Activated CD4-positive, alpha-beta memory T cell treated with anti-CD3 and anti-CD28 coated beads for 36 hours (primary cell): ENCODE measurements at regions of chr16 and their contacts with region 1.

Region 1: DNA sequence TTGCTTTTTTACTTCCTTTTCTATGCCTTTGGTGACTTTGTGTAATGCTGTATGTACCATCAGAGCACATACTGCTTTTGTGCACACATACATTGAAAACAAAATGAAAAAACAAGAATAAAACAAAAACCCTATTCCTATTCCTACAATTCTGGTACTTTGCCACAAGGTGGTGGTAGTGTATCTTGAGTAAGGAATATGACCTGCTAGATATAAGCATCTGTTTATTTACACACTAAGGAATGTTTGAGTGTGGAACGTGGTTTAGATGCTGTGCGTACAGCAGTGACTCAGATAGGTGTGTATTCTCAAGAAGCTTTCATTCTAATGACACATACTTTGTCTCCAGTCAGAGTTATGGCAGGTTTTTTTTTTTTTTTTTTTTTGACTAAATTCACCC is 606.2 kb downstream of the WWOX start:
- DNase-seq: peak; percentile 51
- H3K4me3 Mint-ChIP-seq: no peak overlapping the region
- H3K27ac Mint-ChIP-seq: peak overlapping the region; percentile 87
- H3K4me1 Mint-ChIP-seq: peaks cover 16% of the 10 kb centered on the region
- H3K27me3 Mint-ChIP-seq: no peaks in the 10 kb centered on the region

Region 2: GRCh38 chr16:78503602-78504001 is 202.1 kb before region 1 on chr16:
- CTCF ChIA-PET with region 1: no interaction called
- POLR2A ChIA-PET with region 1: no interaction called
- intact Hi-C with region 1: loop called (anchors 5 kb)
- DNase-seq: peak; percentile 52
- H3K4me3 Mint-ChIP-seq: no peak overlapping the region
- H3K27ac Mint-ChIP-seq: no peak overlapping the region
- H3K4me1 Mint-ChIP-seq: no peaks in the 10 kb centered on the region
- H3K27me3 Mint-ChIP-seq: no peaks in the 10 kb centered on the region

Region 3: GRCh38 chr16:78672779-78673556 is 32.7 kb before region 1 on chr16:
- CTCF ChIA-PET with region 1: no interaction called
- POLR2A ChIA-PET with region 1: no interaction called
- intact Hi-C with region 1: loop called (anchors 1 kb)
- DNase-seq: no peak
- H3K4me3 Mint-ChIP-seq: no peak overlapping the region
- H3K27ac Mint-ChIP-seq: no peak overlapping the region
- H3K4me1 Mint-ChIP-seq: no peaks in the 10 kb centered on the region
- H3K27me3 Mint-ChIP-seq: no peaks in the 10 kb centered on the region

Region 4: DNA sequence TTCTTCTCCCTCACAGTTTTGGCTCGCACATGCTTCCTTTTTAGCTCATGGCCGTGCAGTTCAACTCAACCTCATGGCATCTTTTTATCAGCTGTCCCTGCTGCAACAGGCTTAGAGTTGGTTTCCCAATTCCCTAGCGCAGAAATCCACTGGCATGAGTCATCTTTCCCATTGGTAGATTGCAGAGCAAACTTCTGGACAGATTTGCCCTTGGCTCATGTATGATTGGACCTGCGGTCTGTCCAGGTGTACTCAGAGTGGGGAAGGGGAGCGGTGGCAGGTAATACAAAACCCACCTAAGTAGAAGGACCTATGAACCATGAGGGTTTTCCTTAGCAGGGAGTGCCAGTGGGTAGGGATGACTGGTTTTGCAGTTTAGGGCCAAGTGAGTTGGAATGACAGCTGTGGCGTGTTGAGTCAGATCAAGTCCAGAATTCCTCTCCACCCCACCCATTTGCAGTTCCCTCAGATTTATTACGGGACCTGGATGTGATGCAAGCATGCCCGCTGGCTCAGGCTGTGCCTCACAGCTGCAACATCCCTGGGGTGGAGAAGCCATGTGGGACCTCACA is 21.6 kb before region 1 on chr16:
- CTCF ChIA-PET with region 1: no interaction called
- POLR2A ChIA-PET with region 1: no interaction called
- intact Hi-C with region 1: no loop called
- DNase-seq: no peak
- H3K4me3 Mint-ChIP-seq: no peak overlapping the region
- H3K27ac Mint-ChIP-seq: no peak overlapping the region
- H3K4me1 Mint-ChIP-seq: no peaks in the 10 kb centered on the region
- H3K27me3 Mint-ChIP-seq: no peaks in the 10 kb centered on the region

Region 5: GRCh38 chr16:78742501-78743283 is 37.0 kb after region 1 on chr16:
- CTCF ChIA-PET with region 1: interaction called, 3 read pairs
- POLR2A ChIA-PET with region 1: no interaction called
- intact Hi-C with region 1: loop called (anchors 1 kb)
- DNase-seq: peak; percentile 94
- H3K4me3 Mint-ChIP-seq: peak overlapping the region; percentile 73
- H3K27ac Mint-ChIP-seq: peak overlapping the region; percentile 95
- H3K4me1 Mint-ChIP-seq: peaks cover 40% of the 10 kb centered on the region
- H3K27me3 Mint-ChIP-seq: no peaks in the 10 kb centered on the region

Region 6: DNA sequence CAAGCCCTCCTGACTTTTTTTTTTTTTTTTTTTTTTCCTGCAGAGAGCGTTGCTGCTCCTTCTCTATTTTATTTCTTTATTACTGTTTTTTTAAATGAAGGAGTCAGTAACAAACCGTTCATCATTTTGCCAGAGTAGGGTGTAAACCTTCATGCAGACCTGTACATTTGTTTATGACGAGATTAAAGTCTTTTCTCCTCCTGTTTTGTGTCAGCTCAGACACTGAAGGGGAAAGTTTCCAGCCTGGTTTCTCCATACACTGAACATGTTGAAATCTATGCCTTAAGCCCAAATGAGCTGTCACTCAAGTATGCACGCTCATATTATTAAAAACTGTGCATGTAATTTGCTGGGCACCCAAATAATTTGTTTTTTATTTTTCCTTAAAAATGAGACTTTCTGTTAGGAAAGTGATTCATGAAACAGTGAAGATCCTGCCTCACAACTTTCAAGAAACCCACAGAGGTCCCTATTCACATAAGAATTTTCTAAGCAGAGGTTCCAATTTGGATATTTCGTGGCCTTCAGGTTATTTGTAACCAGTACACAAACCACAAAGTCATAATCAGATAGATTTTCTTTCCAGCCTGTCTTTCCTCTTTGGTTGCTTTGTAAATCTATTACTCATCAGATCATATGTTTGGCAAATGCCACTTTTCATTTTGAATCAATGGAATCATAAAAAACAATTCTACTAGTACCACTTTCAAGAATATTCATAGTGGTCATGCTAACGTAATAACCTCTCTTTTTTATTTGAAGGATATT is 194.5 kb after region 1 on chr16:
- CTCF ChIA-PET with region 1: interaction called, 6 read pairs
- POLR2A ChIA-PET with region 1: no interaction called
- intact Hi-C with region 1: loop called (anchors 1 kb)
- DNase-seq: no peak
- H3K4me3 Mint-ChIP-seq: peak overlapping the region; percentile 20
- H3K27ac Mint-ChIP-seq: peak overlapping the region; percentile 96
- H3K4me1 Mint-ChIP-seq: peaks cover 76% of the 10 kb centered on the region
- H3K27me3 Mint-ChIP-seq: no peaks in the 10 kb centered on the region

Region 7: DNA sequence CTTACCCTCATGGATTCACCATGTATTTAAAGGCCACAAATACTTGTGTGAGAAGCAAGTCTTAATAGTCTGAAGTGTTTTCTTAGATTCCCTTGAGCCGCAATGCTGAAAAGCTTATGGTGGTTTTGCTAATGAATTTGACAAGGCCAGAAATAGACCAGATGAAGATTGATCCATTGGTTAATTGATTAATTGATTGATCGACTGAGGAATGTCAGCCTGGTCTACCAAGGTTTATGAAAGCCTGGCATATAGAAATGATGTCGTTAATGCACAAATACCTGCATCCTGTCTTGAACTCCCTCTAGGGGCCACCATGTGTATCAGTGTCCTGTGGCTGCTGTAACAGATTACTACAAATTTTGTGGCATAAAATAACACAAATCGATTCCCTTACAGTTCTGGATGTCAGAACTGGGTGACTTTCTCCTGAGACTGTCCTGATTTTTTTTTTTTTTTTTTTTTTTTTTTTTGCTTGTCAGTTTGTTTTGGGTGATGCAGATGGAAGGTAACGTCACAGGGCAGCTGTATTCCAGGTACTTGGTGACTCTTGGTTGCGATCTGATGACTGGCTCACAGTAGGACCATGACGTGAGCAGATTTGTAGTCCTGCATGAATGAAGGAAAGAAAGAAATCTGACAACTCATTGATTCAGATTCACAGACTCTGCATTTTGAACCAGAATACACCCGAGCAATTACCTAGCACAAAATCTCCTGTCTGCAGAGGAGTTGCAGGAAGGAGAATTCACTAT is 341.7 kb after region 1 on chr16:
- CTCF ChIA-PET with region 1: interaction called, 3 read pairs
- POLR2A ChIA-PET with region 1: no interaction called
- intact Hi-C with region 1: loop called (anchors 1 kb)
- DNase-seq: peak; percentile 32
- H3K4me3 Mint-ChIP-seq: no peak overlapping the region
- H3K27ac Mint-ChIP-seq: peak overlapping the region; percentile 50
- H3K4me1 Mint-ChIP-seq: peaks cover 44% of the 10 kb centered on the region
- H3K27me3 Mint-ChIP-seq: no peaks in the 10 kb centered on the region